ENCODE measurements at regions of chr17 and their contacts with region 1.

Region 1: GRCh38 chr17:81253358-81254131 is 14.4 kb downstream of the NDUFAF8 start:
- DNase-seq: peak; percentile 63
- H3K4me3 ChIP-seq: no peak overlapping the region
- H3K27ac ChIP-seq: peak overlapping the region; percentile 94
- H3K4me1 ChIP-seq: peaks cover 39% of the 10 kb centered on the region
- CTCF ChIP-seq: peak; percentile 99

Region 2: GRCh38 chr17:81207610-81208581 is 45.6 kb before region 1 on chr17:
- CTCF ChIA-PET with region 1: no interaction called
- POLR2A ChIA-PET with region 1: no interaction called
- intact Hi-C with region 1: loop called (anchors 1 kb)
- DNase-seq: peak; percentile 94
- H3K4me3 ChIP-seq: no peak overlapping the region
- H3K27ac ChIP-seq: peak overlapping the region; percentile 56
- H3K4me1 ChIP-seq: peaks cover 12% of the 10 kb centered on the region
- CTCF ChIP-seq: no peak

Region 3: GRCh38 chr17:81394921-81395599 is 141.5 kb after region 1 on chr17 and contains the start of gene BAHCC1:
- CTCF ChIA-PET with region 1: no interaction called
- POLR2A ChIA-PET with region 1: no interaction called
- intact Hi-C with region 1: loop called (anchors 2 kb)
- DNase-seq: peak; percentile 100
- H3K4me3 ChIP-seq: peak within 1 kb of the TSS; percentile 74
- H3K27ac ChIP-seq: peak within 1 kb of the TSS; percentile 75
- H3K4me1 ChIP-seq: peaks cover 42% of the 10 kb centered on the region
- CTCF ChIP-seq: no peak
- total RNA-seq, gene BAHCC1: 1.4 and 5.2 TPM in 2 replicates

Region 4: DNA sequence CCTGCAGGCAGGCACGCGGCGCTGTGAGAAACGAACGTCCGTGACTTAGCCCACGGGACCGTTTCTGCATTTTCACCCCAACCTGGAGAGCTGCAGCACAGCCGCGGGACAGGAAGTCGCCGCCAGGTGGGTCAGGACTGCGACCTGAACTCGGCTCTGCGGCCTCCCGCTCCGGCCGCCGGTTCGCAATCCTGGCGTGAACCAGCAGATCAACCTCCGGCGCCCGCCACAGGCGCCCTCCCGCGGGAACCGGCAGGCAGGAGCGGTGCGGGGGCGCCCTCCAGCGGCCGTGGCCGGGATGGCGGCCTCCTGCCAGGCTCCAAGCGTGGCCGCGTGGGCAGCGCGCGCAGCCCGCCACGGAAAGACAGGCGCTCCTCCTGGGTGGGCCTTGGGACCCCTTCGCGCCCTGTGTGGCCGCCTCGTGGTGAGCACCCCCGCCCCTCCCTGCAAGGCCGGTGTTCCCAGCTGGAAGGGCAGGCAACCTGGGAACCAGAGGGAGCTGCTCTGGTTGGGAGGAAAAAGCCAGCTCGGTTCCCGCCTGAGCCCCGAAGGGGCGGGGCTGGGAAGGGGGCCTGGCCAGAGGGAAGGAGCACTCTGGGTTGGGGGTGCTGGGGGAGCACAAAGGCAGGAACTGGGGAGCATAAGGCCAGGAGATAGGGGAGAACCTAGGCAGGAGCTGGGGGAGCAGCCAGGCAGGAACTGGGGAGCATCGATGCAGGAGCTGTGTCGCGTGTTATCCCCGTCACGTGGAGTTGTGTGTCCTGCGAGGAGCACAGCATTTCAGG is 230.8 kb after region 1 on chr17:
- CTCF ChIA-PET with region 1: interaction called, 22 read pairs
- POLR2A ChIA-PET with region 1: no interaction called
- intact Hi-C with region 1: loop called (anchors 1 kb)
- DNase-seq: peak; percentile 98
- H3K4me3 ChIP-seq: peak overlapping the region; percentile 61
- H3K27ac ChIP-seq: no peak overlapping the region
- H3K4me1 ChIP-seq: peaks cover 55% of the 10 kb centered on the region
- CTCF ChIP-seq: peak; percentile 99

Region 5: GRCh38 chr17:81553018-81553615 is 299.6 kb after region 1 on chr17:
- CTCF ChIA-PET with region 1: no interaction called
- POLR2A ChIA-PET with region 1: no interaction called
- intact Hi-C with region 1: loop called (anchors 2 kb)
- DNase-seq: peak; percentile 94
- H3K4me3 ChIP-seq: peak overlapping the region; percentile 88
- H3K27ac ChIP-seq: peak overlapping the region; percentile 80
- H3K4me1 ChIP-seq: peaks cover 30% of the 10 kb centered on the region
- CTCF ChIP-seq: peak; percentile 59

Measured in OCI-LY7 (cell line).